GM12878 (cell line): ENCODE measurements at regions of chr2 and their contacts with region 1.

Region 1: DNA sequence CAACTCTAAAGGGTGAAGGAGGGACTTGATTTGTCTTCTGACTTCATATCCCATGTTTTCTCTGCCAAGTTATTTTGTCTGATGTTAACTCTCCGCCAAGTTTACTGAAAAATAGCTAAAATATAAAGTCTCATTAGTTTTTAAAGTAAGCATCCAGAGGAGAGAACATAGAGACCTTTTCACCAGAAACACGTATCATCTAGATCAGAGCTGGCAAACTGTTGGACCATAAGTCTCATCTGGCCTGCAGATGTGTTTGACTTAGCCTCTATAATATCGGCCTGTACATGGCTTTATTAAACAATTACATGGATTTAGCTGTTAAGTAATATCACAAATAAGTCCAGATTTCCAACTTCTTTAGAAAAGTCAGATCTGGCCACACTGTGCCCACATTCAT is 182.6 kb downstream of the PLCL1 start:
- DNase-seq: no peak
- ATAC-seq: no peak
- H3K4me3 ChIP-seq: no peak overlapping the region
- H3K27ac ChIP-seq: no peak overlapping the region
- H3K4me1 ChIP-seq: peaks cover 5% of the 10 kb centered on the region
- H3K27me3 ChIP-seq: no peaks in the 10 kb centered on the region
- CTCF ChIP-seq: no peak
- EP300 ChIP-seq: no peak
- POLR2A ChIP-seq: no peak
- RAD21 ChIP-seq: no peak

Region 2: DNA sequence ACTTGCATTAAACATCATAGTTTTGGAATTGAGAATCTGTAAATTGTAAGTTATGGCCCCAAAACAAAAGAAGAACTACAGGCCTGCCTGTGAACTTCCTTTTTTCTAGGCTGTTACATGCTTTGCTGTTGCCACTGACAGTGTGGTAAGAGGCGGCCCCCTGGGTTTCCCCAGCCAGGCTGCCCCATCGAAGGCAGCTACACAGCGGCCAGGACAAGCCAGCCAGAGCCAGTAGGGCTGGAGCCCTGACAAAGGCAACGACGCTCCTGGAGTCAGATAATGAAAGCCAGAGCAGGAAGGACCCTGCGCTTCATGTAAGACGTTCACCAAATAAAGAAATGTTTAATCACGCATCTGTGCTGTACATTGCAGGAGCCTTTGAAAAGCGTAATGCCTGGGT is 731.4 kb before region 1 on chr2:
- CTCF ChIA-PET with region 1: no interaction called
- POLR2A ChIA-PET with region 1: no interaction called
- RAD21 ChIA-PET with region 1: no interaction called
- SMC1A ChIA-PET with region 1: no interaction called
- in situ Hi-C with region 1: no loop called
- intact Hi-C with region 1: no loop called
- DNase-seq: peak; percentile 81
- ATAC-seq: peak; percentile 94
- H3K4me3 ChIP-seq: peak overlapping the region; percentile 59
- H3K27ac ChIP-seq: peak overlapping the region; percentile 97
- H3K4me1 ChIP-seq: peaks cover 31% of the 10 kb centered on the region
- H3K27me3 ChIP-seq: no peaks in the 10 kb centered on the region
- CTCF ChIP-seq: no peak
- EP300 ChIP-seq: peak; percentile 57 to 66; a peak in 3 of 4 replicates
- POLR2A ChIP-seq: peak; percentile 98
- RAD21 ChIP-seq: peak; percentile 20; the same call in 1 of the 2 replicates

Region 3: DNA sequence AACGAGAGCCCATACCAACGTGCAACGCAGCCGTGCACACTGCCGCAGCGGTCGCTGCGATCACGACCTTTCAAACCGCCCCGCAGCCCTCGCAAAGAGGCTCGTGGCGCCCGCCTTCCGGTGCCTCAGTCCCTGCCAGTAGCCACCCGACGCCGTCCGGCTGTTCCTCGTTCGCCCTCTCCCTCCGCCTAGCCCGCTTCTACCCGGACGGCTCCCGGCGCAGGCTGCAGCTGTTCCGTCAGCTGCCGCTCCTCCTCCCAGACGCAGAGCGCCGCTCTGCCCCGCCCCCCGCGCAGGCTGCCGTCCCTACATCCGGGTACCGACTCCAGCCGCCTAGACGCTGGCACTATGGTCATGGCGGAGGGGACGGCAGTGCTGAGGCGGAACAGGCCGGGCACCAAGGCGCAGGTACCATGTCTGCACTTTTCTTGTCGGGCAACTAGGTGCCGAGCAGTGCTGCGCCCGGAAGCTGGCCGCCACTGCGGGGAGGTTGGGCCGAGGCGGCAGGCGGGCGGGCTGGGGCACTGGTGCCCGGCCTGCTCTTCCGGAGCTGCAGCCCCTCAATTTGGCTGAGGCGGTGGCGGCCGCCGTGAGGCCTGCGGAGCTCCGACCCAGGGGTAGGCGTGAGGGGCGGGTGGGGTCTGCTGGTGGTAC is 471.1 kb before region 1 on chr2 and contains the start of gene MOB4:
- CTCF ChIA-PET with region 1: no interaction called
- POLR2A ChIA-PET with region 1: interaction called, 10 read pairs
- RAD21 ChIA-PET with region 1: no interaction called
- SMC1A ChIA-PET with region 1: no interaction called
- in situ Hi-C with region 1: no loop called
- intact Hi-C with region 1: no loop called
- DNase-seq: peak; percentile 82
- ATAC-seq: peak; percentile 95
- H3K4me3 ChIP-seq: peak within 1 kb of the TSS; percentile 99
- H3K27ac ChIP-seq: peak within 1 kb of the TSS; percentile 95
- H3K4me1 ChIP-seq: peaks cover 7% of the 10 kb centered on the region
- H3K27me3 ChIP-seq: no peaks in the 10 kb centered on the region
- CTCF ChIP-seq: no peak
- EP300 ChIP-seq: peak in 1 of 2 experiments; percentile 99; a peak in 2 of 4 replicates
- POLR2A ChIP-seq: peak; percentile 98
- RAD21 ChIP-seq: no peak
- polyA plus RNA-seq, gene MOB4: 40.6 to 43.4 TPM

Region 4: DNA sequence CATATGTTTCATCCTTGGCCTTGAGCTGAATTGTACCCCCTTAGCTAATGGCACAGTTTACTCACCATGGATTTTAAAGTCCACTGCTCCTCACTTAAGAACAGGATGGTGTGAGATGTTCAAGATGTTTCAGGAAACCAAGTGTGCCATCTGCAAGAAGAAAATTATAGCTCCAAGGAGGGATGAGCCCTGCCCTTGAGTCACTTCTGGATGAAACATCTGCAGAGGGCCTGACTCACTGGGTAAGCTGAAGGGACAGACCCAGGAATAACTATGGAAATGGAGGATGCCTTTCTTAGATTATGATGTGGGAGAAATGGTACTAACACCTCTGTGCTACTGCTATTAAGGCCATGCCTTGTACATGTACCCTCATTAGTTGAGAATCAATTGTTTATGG is 275.4 kb before region 1 on chr2:
- CTCF ChIA-PET with region 1: no interaction called
- POLR2A ChIA-PET with region 1: no interaction called
- RAD21 ChIA-PET with region 1: no interaction called
- SMC1A ChIA-PET with region 1: no interaction called
- in situ Hi-C with region 1: no loop called
- intact Hi-C with region 1: no loop called
- DNase-seq: no peak
- ATAC-seq: no peak
- H3K4me3 ChIP-seq: no peak overlapping the region
- H3K27ac ChIP-seq: no peak overlapping the region
- H3K4me1 ChIP-seq: peaks cover 19% of the 10 kb centered on the region
- H3K27me3 ChIP-seq: no peaks in the 10 kb centered on the region
- CTCF ChIP-seq: no peak
- EP300 ChIP-seq: no peak
- POLR2A ChIP-seq: no peak
- RAD21 ChIP-seq: no peak

Region 5: GRCh38 chr2:197813093-197813787 is 173.7 kb before region 1 on chr2:
- CTCF ChIA-PET with region 1: interaction called, 9 read pairs
- POLR2A ChIA-PET with region 1: no interaction called
- RAD21 ChIA-PET with region 1: interaction called, 5 read pairs
- SMC1A ChIA-PET with region 1: interaction called, 11 read pairs
- in situ Hi-C with region 1: no loop called
- intact Hi-C with region 1: no loop called
- DNase-seq: no peak
- ATAC-seq: peak; percentile 64
- H3K4me3 ChIP-seq: no peak overlapping the region
- H3K27ac ChIP-seq: no peak overlapping the region
- H3K4me1 ChIP-seq: no peaks in the 10 kb centered on the region
- H3K27me3 ChIP-seq: peaks cover 0 to 3% of the 10 kb centered on the region in 2 experiments; a peak in 1 of 4 replicates
- CTCF ChIP-seq: peak; percentile 43 to 61 (median 56)
- EP300 ChIP-seq: no peak
- POLR2A ChIP-seq: no peak
- RAD21 ChIP-seq: no peak

Region 6: DNA sequence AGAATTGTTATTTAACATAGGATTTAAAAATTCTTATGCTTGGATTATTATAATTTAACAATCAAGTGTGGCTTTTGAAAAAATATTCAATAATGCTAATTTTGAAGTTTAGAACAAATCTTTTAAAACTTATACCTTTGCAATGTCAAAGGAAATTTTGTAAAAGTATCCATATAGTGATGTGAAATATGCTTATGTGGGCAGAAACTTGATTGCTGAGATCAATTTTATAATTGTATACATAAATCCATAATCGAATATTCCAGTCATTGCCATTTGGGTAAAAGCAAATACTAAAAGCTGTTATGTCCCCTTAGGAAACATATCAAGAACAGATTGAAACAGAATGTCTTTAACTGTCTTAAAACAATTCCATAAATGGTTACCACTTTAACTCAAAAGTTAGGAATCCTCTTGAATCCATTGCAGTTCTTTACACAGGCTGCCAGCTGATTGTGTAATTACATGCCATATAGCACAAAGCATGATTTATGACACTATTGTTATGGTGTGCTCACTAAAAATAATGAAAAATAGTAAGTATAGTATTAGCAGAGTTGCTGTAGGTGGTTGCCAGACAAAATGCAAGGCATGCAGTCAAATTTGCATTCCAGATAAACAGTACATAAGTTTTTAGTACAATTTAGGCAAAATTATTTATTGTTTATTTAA is 158.4 kb before region 1 on chr2:
- CTCF ChIA-PET with region 1: no interaction called
- POLR2A ChIA-PET with region 1: no interaction called
- RAD21 ChIA-PET with region 1: no interaction called
- SMC1A ChIA-PET with region 1: no interaction called
- in situ Hi-C with region 1: no loop called
- intact Hi-C with region 1: no loop called
- DNase-seq: no peak
- ATAC-seq: no peak
- H3K4me3 ChIP-seq: no peak overlapping the region
- H3K27ac ChIP-seq: no peak overlapping the region
- H3K4me1 ChIP-seq: no peaks in the 10 kb centered on the region
- H3K27me3 ChIP-seq: peaks cover 0 to 4% of the 10 kb centered on the region in 2 experiments; a peak in 1 of 4 replicates
- CTCF ChIP-seq: no peak
- EP300 ChIP-seq: no peak
- POLR2A ChIP-seq: no peak
- RAD21 ChIP-seq: no peak

Region 7: GRCh38 chr2:197889041-197889440 is 97.9 kb before region 1 on chr2:
- CTCF ChIA-PET with region 1: interaction called, 6 read pairs
- POLR2A ChIA-PET with region 1: interaction called, 3 read pairs
- RAD21 ChIA-PET with region 1: interaction called, 9 read pairs
- SMC1A ChIA-PET with region 1: interaction called, 18 read pairs
- in situ Hi-C with region 1: no loop called
- intact Hi-C with region 1: no loop called
- DNase-seq: peak; percentile 77
- ATAC-seq: peak; percentile 98
- H3K4me3 ChIP-seq: no peak overlapping the region
- H3K27ac ChIP-seq: peak overlapping the region; percentile 27; the same call in 1 of the 2 replicates
- H3K4me1 ChIP-seq: peaks cover 4% of the 10 kb centered on the region
- H3K27me3 ChIP-seq: no peaks in the 10 kb centered on the region
- CTCF ChIP-seq: no peak
- EP300 ChIP-seq: peak; percentile 37 to 83; a peak in 2 of 4 replicates
- POLR2A ChIP-seq: no peak
- RAD21 ChIP-seq: no peak

Region 8: GRCh38 chr2:197958592-197959150 is 28.3 kb before region 1 on chr2:
- CTCF ChIA-PET with region 1: interaction called, 4 read pairs
- POLR2A ChIA-PET with region 1: interaction called, 6 read pairs
- RAD21 ChIA-PET with region 1: interaction called, 25 read pairs
- SMC1A ChIA-PET with region 1: interaction called, 15 read pairs
- in situ Hi-C with region 1: no loop called
- intact Hi-C with region 1: no loop called
- DNase-seq: no peak
- ATAC-seq: peak; percentile 36; the same call in 2 of the 3 replicates
- H3K4me3 ChIP-seq: no peak overlapping the region
- H3K27ac ChIP-seq: no peak overlapping the region
- H3K4me1 ChIP-seq: no peaks in the 10 kb centered on the region
- H3K27me3 ChIP-seq: no peaks in the 10 kb centered on the region
- CTCF ChIP-seq: no peak
- EP300 ChIP-seq: no peak
- POLR2A ChIP-seq: no peak
- RAD21 ChIP-seq: no peak

Region 9: DNA sequence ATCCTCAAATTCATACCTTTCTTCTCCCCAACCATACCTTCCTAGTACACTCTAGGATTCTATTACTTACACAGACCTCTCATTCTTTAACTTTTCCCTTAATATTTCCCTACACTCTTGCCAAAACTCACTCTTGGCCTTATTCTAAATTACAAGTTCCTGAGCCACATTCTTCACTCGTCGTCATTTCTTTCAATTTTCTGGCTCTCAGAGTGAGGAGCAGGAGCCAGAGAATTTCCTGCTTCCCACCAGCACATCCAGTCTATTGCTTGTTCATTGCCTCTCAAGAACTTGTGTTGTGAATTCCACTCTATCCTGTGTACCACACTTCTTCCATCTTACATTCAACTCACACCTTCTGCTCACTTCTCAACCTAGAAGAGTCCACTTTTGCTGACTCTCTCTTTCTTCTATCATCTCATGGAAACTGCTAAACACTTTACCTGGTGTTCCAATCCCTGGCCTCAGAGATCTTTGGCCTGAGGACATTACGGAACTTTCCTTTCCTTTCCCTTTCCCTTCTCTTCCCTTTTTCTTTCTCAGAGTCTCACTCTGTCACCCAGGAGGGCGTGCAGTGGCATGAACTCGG is 11.0 kb before region 1 on chr2:
- CTCF ChIA-PET with region 1: interaction called, 9 read pairs
- POLR2A ChIA-PET with region 1: interaction called, 4 read pairs
- RAD21 ChIA-PET with region 1: interaction called, 3 read pairs
- SMC1A ChIA-PET with region 1: interaction called, 19 read pairs
- in situ Hi-C with region 1: no loop called
- intact Hi-C with region 1: no loop called
- DNase-seq: no peak
- ATAC-seq: no peak
- H3K4me3 ChIP-seq: no peak overlapping the region
- H3K27ac ChIP-seq: no peak overlapping the region
- H3K4me1 ChIP-seq: no peaks in the 10 kb centered on the region
- H3K27me3 ChIP-seq: no peaks in the 10 kb centered on the region
- CTCF ChIP-seq: no peak
- EP300 ChIP-seq: no peak
- POLR2A ChIP-seq: no peak
- RAD21 ChIP-seq: no peak

Region 10: GRCh38 chr2:198042189-198042588 is 55.2 kb after region 1 on chr2:
- CTCF ChIA-PET with region 1: no interaction called
- POLR2A ChIA-PET with region 1: no interaction called
- RAD21 ChIA-PET with region 1: interaction called, 5 read pairs
- SMC1A ChIA-PET with region 1: interaction called, 11 read pairs
- in situ Hi-C with region 1: no loop called
- intact Hi-C with region 1: no loop called
- DNase-seq: no peak
- ATAC-seq: peak; percentile 71
- H3K4me3 ChIP-seq: no peak overlapping the region
- H3K27ac ChIP-seq: peak overlapping the region; percentile 14; the same call in 1 of the 2 replicates
- H3K4me1 ChIP-seq: no peaks in the 10 kb centered on the region
- H3K27me3 ChIP-seq: no peaks in the 10 kb centered on the region
- CTCF ChIP-seq: no peak
- EP300 ChIP-seq: peak in 1 of 2 experiments; percentile 35; a peak in 1 of 4 replicates
- POLR2A ChIP-seq: no peak
- RAD21 ChIP-seq: no peak